Ascending aorta (tissue), 2 donors: ENCODE measurements at regions of chr10 and their contacts with region 1.

Region 1: DNA sequence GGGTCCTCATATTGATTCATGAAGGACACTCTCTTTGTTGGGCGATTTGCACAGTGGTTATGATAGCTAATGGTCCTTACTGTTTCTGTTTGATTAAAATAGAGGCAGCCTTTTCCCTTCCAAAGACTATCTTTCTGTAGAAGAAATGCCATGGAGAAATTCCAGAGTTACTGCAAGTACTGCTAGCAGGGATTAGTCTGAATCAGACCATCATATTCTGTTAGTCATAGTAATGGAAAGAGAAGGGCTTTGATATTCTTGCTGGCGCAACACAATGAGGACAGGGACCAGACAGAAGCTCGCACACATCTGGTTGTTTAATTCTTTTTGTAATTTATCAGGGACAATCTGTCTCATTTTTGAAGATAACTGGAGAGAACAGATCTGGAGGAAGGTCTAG is 304.5 kb upstream of the FZD8 start:
- DNase-seq: no peak
- H3K4me3 ChIP-seq: no peak overlapping the region
- H3K27ac ChIP-seq: no peak overlapping the region
- H3K4me1 ChIP-seq: no peaks in the 10 kb centered on the region
- H3K27me3 ChIP-seq: no peaks in the 10 kb centered on the region
- CTCF ChIP-seq: no peak

Region 2: GRCh38 chr10:35898716-35899440 is 47.7 kb before region 1 on chr10:
- intact Hi-C with region 1: no loop called
- DNase-seq: no peak
- H3K4me3 ChIP-seq: no peak overlapping the region
- H3K27ac ChIP-seq: no peak overlapping the region
- H3K4me1 ChIP-seq: no peaks in the 10 kb centered on the region
- H3K27me3 ChIP-seq: no peaks in the 10 kb centered on the region
- CTCF ChIP-seq: no peak

Region 3: GRCh38 chr10:35933998-35934995 is 12.3 kb before region 1 on chr10:
- intact Hi-C with region 1: loop called (anchors 1 kb)
- DNase-seq: no peak
- H3K4me3 ChIP-seq: no peak overlapping the region
- H3K27ac ChIP-seq: no peak overlapping the region
- H3K4me1 ChIP-seq: no peaks in the 10 kb centered on the region
- H3K27me3 ChIP-seq: no peaks in the 10 kb centered on the region
- CTCF ChIP-seq: no peak